ENCODE measurements at regions of chr12 and their contacts with region 1.

Region 1: GRCh38 chr12:91877022-91877421 is 268.6 kb downstream of the BTG1 start:
- DNase-seq: peak; percentile 88
- ATAC-seq: peak; percentile 97
- H3K4me3 Mint-ChIP-seq: peak overlapping the region; percentile 55
- H3K27ac Mint-ChIP-seq: peak overlapping the region; percentile 97
- H3K4me1 Mint-ChIP-seq: peaks cover 71% of the 10 kb centered on the region
- H3K27me3 Mint-ChIP-seq: no peaks in the 10 kb centered on the region

Region 2: GRCh38 chr12:91098941-91099340 is 778.1 kb before region 1 on chr12:
- CTCF ChIA-PET with region 1: no interaction called
- POLR2A ChIA-PET with region 1: no interaction called
- intact Hi-C with region 1: no loop called
- DNase-seq: no peak
- ATAC-seq: no peak
- H3K4me3 Mint-ChIP-seq: no peak overlapping the region
- H3K27ac Mint-ChIP-seq: no peak overlapping the region
- H3K4me1 Mint-ChIP-seq: no peaks in the 10 kb centered on the region
- H3K27me3 Mint-ChIP-seq: peaks cover 6% of the 10 kb centered on the region

Region 3: DNA sequence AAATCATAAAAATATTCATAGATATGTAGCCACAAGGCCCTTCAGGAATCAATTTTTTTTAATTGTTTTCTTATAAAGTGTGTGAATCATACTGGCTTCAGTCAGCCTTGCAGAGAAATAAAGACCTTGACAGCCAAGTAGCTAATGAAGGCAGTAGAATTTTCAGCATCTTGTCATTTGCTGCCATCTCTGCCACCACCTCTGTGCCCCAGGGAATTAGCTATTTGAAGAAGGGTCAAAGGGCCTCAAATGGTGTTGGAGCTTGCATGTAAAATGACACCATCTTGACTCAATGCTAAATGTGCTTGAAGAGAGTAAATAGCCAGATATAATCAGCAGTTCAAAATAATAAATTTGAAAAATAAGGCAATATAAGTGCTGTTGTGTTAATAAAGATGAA is 334.9 kb before region 1 on chr12:
- CTCF ChIA-PET with region 1: no interaction called
- POLR2A ChIA-PET with region 1: no interaction called
- intact Hi-C with region 1: no loop called
- DNase-seq: no peak
- ATAC-seq: no peak
- H3K4me3 Mint-ChIP-seq: no peak overlapping the region
- H3K27ac Mint-ChIP-seq: no peak overlapping the region
- H3K4me1 Mint-ChIP-seq: no peaks in the 10 kb centered on the region
- H3K27me3 Mint-ChIP-seq: no peaks in the 10 kb centered on the region

Region 4: DNA sequence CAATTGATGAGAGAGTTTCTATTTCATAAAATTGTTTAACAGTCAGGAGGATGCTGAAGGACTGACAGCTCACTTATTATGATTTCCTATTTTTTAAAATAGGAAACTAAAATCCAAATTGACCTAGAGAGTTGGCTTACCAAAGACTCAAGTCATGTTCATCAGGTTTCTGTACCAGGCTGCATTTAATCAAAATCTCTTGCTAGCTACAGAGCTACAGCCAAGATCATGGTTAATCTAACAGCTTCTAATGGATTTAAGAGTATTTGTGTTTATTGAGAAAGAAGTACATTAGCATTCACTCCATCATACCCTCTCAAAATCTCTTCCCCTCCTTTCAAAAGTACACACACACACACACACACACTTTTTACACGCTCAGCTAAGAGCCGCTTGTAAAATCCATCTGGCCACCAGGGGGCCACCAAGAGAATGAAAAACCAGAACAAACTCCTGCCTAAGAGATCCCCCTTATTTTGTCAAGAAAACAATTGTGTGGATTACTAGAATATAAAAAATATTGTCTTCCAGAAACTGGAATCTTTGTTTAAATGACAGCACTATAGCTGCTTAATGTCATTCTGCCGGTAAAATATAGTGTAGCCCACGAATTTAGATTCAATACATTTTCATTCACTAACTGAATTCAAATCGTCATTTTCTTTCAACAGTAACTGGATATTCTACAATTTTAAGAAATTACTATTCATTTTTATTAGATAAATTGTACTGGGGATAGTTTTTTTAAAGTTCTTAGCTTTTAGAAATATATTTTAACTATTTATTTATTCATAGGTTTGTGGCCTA is 65.3 kb before region 1 on chr12:
- CTCF ChIA-PET with region 1: interaction called, 26 read pairs
- POLR2A ChIA-PET with region 1: no interaction called
- intact Hi-C with region 1: loop called in 1 of 2 experiments (anchors 5 kb)
- DNase-seq: peak; percentile 82
- ATAC-seq: peak; percentile 68
- H3K4me3 Mint-ChIP-seq: no peak overlapping the region
- H3K27ac Mint-ChIP-seq: peak overlapping the region; percentile 8
- H3K4me1 Mint-ChIP-seq: peaks cover 17% of the 10 kb centered on the region
- H3K27me3 Mint-ChIP-seq: no peaks in the 10 kb centered on the region

Region 5: GRCh38 chr12:91947459-91947858 is 70.4 kb after region 1 on chr12:
- CTCF ChIA-PET with region 1: no interaction called
- POLR2A ChIA-PET with region 1: no interaction called
- intact Hi-C with region 1: no loop called
- DNase-seq: no peak
- ATAC-seq: peak; percentile 80
- H3K4me3 Mint-ChIP-seq: no peak overlapping the region
- H3K27ac Mint-ChIP-seq: no peak overlapping the region
- H3K4me1 Mint-ChIP-seq: peaks cover 13% of the 10 kb centered on the region
- H3K27me3 Mint-ChIP-seq: no peaks in the 10 kb centered on the region

Region 6: DNA sequence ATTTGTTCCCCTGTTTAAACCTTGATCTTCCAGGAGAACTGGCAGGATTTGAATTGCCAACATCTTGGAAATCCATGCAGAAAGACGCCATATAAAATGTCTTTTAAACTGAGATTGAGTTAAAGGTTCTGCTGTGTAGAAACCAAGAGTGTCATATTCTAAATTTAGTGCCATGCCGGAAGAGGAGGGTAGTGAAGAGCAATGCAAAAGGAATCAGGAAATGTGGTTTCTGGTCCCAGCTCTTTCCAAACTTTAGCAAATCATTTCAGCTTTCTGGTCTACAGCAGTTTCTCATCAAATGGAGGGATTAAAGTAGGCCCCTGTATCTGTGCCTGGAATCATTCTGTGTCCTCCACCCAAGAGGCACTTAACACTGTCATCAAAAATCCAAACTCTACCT is 183.0 kb after region 1 on chr12:
- CTCF ChIA-PET with region 1: no interaction called
- POLR2A ChIA-PET with region 1: no interaction called
- intact Hi-C with region 1: loop called (anchors 1 to 5 kb)
- DNase-seq: no peak
- ATAC-seq: no peak
- H3K4me3 Mint-ChIP-seq: peak overlapping the region; percentile 42
- H3K27ac Mint-ChIP-seq: peak overlapping the region; percentile 35
- H3K4me1 Mint-ChIP-seq: peaks cover 90% of the 10 kb centered on the region
- H3K27me3 Mint-ChIP-seq: no peaks in the 10 kb centered on the region

Region 7: DNA sequence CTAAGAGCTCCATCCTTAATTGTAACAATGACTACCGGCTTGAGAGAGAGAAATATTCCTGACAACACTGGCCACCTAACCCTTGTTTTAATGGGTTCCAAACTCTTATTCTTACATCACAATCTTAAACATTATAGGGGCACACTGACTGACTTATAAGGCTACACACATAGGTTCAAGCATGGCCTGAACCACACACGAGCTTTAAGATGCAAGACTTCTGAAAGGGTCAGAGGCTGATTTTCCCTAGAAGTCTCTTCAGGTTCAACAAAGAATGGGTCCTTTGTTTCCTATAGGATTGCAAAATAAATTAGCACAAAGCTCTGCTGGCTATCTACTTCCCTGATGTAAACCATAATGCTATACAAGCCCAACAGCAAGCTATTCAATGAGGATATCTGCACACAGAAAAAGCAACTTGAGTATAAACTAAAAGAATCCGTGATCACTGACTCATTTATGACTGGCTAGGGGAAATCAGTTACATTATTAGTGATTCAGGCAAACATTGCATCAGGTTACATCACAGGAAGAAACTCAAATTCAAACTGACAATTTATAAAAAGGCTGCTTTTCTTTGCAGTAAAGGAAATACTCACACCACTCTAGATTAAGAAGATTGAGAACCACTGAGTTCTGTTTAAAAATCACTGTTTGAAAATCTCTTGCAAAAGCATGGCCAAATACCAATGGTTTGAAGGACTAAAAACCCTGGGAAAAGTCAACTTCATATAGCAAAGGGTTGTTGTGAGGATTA is 260.1 kb after region 1 on chr12:
- CTCF ChIA-PET with region 1: no interaction called
- POLR2A ChIA-PET with region 1: interaction called, 3 read pairs
- intact Hi-C with region 1: loop called in 1 of 2 experiments (anchors 2 kb)
- DNase-seq: no peak
- ATAC-seq: peak; percentile 47
- H3K4me3 Mint-ChIP-seq: peak overlapping the region; percentile 99
- H3K27ac Mint-ChIP-seq: peak overlapping the region; percentile 94
- H3K4me1 Mint-ChIP-seq: peaks cover 67% of the 10 kb centered on the region
- H3K27me3 Mint-ChIP-seq: no peaks in the 10 kb centered on the region

Region 8: DNA sequence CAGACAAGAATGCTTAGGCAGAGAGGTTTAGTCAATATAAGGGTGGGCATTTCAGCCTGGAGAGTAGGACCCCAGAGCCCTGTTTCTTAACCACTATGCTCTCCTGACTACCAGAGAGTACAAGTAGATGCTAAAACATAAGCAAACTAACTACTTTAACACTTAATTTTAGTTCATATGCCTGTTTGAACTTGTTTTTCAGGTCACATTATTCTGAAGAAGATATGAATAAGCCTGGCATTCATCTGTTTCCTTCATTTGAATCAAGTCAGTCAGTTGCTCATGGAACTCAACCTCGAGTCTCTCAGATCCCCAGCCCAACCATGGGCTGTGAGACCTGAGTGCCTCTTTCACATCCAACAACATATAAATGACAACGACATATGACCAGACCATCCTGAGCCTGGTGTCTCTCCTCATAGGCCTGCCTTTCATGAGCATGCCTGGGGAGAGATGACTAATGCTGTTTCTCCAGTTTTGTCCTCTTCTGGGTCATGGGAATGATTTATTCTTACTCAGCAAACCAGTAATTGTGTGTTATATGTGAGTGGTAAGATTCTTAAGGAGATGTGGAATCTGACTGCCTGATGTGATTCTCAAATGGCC is 519.7 kb after region 1 on chr12:
- CTCF ChIA-PET with region 1: no interaction called
- POLR2A ChIA-PET with region 1: no interaction called
- intact Hi-C with region 1: loop called (anchors 5 to 10 kb)
- DNase-seq: peak; percentile 46
- ATAC-seq: peak; percentile 44
- H3K4me3 Mint-ChIP-seq: no peak overlapping the region
- H3K27ac Mint-ChIP-seq: peak overlapping the region; percentile 95
- H3K4me1 Mint-ChIP-seq: peaks cover 93% of the 10 kb centered on the region
- H3K27me3 Mint-ChIP-seq: no peaks in the 10 kb centered on the region

Region 9: DNA sequence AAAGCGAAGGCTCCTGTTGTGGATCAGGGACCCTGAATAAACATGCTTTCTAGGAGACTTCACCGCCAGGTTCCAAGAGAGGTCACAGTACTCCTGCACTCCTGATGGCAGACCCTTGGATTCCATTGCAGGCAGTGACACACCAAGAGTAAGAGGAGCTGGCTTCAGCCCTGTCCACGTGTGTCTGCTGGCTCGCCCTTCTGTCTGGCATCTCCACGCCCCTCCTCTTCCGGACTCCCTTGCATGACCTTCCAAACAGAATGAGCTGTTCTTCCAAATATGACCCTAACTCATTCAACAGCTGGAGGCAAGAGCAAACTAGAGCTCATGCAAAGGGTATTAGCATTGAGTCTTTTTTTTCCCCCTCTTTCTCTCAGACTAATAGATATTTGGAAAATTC is 592.8 kb after region 1 on chr12:
- CTCF ChIA-PET with region 1: no interaction called
- POLR2A ChIA-PET with region 1: no interaction called
- intact Hi-C with region 1: loop called in 1 of 2 experiments (anchors 1 kb)
- DNase-seq: no peak
- ATAC-seq: no peak
- H3K4me3 Mint-ChIP-seq: no peak overlapping the region
- H3K27ac Mint-ChIP-seq: peak overlapping the region; percentile 85
- H3K4me1 Mint-ChIP-seq: peaks cover 48% of the 10 kb centered on the region
- H3K27me3 Mint-ChIP-seq: no peaks in the 10 kb centered on the region

Measured in activated CD4-positive, alpha-beta T cell treated with anti-CD3 and anti-CD28 coated beads for 36 hours (primary cell).